ENCODE measurements at regions of chr9 and their contacts with region 1.

Region 1: GRCh38 chr9:136631038-136632000 is 31.4 kb upstream of the EGFL7 start:
- DNase-seq: peak; percentile 78
- H3K4me3 ChIP-seq: no peak overlapping the region
- H3K27ac ChIP-seq: no peak overlapping the region
- H3K4me1 ChIP-seq: peaks cover 29% of the 10 kb centered on the region
- H3K27me3 ChIP-seq: peaks cover 12% of the 10 kb centered on the region
- CTCF ChIP-seq: peak; percentile 90

Region 2: GRCh38 chr9:136439550-136440408 is 191.5 kb before region 1 on chr9 and contains the start of gene INPP5E:
- intact Hi-C with region 1: no loop called
- DNase-seq: peak; percentile 80
- H3K4me3 ChIP-seq: peak within 1 kb of the TSS; percentile 98
- H3K27ac ChIP-seq: peak within 1 kb of the TSS; percentile 91
- H3K4me1 ChIP-seq: peaks cover 50% of the 10 kb centered on the region
- H3K27me3 ChIP-seq: no peaks in the 10 kb centered on the region
- CTCF ChIP-seq: peak; percentile 85
- total RNA-seq, gene INPP5E: 10.6 TPM

Region 3: GRCh38 chr9:136485049-136486045 is 146.0 kb before region 1 on chr9:
- intact Hi-C with region 1: loop called (anchors 5 kb)
- DNase-seq: peak; percentile 85
- H3K4me3 ChIP-seq: no peak overlapping the region
- H3K27ac ChIP-seq: no peak overlapping the region
- H3K4me1 ChIP-seq: peaks cover 61% of the 10 kb centered on the region
- H3K27me3 ChIP-seq: no peaks in the 10 kb centered on the region
- CTCF ChIP-seq: peak; percentile 94